Activated CD4-positive, alpha-beta T cell treated with anti-CD3 and anti-CD28 coated beads for 36 hours (primary cell): ENCODE measurements at regions of chr14 and their contacts with region 1.

Region 1: GRCh38 chr14:103444837-103445524 is 59.8 kb downstream of the MARK3 start:
- DNase-seq: no peak
- ATAC-seq: no peak
- H3K4me3 Mint-ChIP-seq: no peak overlapping the region
- H3K27ac Mint-ChIP-seq: no peak overlapping the region
- H3K4me1 Mint-ChIP-seq: peaks cover 34% of the 10 kb centered on the region
- H3K27me3 Mint-ChIP-seq: no peaks in the 10 kb centered on the region

Region 2: DNA sequence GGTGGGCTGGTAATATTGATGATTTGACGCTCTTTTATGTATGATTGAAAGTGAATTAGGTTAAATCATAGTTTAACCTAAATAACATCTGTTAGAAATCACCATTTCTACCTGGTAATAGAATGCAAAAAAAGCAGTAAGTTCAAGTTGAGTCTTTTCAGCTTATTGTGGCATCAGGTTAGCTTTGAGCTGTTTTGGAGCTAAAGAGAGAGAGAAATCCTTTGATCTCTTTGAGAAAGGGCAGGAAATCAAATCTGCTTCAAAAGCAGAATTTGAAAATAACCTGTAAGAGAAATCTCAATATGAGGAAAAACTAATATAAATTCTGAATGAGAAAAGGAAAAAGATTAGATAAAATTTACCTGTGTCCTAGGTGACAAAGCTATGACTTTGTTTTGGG is 15.4 kb after region 1 on chr14:
- CTCF ChIA-PET with region 1: interaction called, 21 read pairs
- POLR2A ChIA-PET with region 1: no interaction called
- intact Hi-C with region 1: no loop called
- DNase-seq: no peak
- ATAC-seq: no peak
- H3K4me3 Mint-ChIP-seq: no peak overlapping the region
- H3K27ac Mint-ChIP-seq: peak overlapping the region; percentile 16
- H3K4me1 Mint-ChIP-seq: peaks cover 22% of the 10 kb centered on the region
- H3K27me3 Mint-ChIP-seq: no peaks in the 10 kb centered on the region

Region 3: DNA sequence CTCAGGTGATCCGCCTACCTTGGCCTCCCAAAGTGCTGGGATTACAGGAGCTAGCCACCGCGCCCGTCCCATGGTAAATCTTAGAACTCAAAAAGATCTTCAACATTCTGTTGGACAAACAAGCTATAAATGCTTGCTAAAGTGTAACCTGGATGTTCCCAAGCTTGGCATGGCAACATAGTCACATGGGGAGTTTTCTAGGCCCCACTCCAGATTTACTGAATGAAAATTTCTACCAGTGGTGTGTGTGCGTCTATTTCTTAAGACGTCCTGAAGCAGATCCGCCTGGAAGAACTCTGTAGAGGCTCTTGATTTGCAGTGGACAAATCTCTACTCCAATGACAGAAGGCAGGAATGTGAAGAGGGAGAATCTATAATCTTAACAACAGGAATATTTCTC is 330.5 kb after region 1 on chr14:
- CTCF ChIA-PET with region 1: no interaction called
- POLR2A ChIA-PET with region 1: no interaction called
- intact Hi-C with region 1: loop called in 1 of 2 experiments (anchors 5 kb)
- DNase-seq: no peak
- ATAC-seq: no peak
- H3K4me3 Mint-ChIP-seq: no peak overlapping the region
- H3K27ac Mint-ChIP-seq: no peak overlapping the region
- H3K4me1 Mint-ChIP-seq: no peaks in the 10 kb centered on the region
- H3K27me3 Mint-ChIP-seq: no peaks in the 10 kb centered on the region

Region 4: GRCh38 chr14:103931422-103931821 is 486.4 kb after region 1 on chr14:
- CTCF ChIA-PET with region 1: no interaction called
- POLR2A ChIA-PET with region 1: no interaction called
- intact Hi-C with region 1: no loop called
- DNase-seq: no peak
- ATAC-seq: peak; percentile 80
- H3K4me3 Mint-ChIP-seq: no peak overlapping the region
- H3K27ac Mint-ChIP-seq: no peak overlapping the region
- H3K4me1 Mint-ChIP-seq: no peaks in the 10 kb centered on the region
- H3K27me3 Mint-ChIP-seq: no peaks in the 10 kb centered on the region